ENCODE measurements at regions of chr1 and their contacts with region 1.

Region 1: DNA sequence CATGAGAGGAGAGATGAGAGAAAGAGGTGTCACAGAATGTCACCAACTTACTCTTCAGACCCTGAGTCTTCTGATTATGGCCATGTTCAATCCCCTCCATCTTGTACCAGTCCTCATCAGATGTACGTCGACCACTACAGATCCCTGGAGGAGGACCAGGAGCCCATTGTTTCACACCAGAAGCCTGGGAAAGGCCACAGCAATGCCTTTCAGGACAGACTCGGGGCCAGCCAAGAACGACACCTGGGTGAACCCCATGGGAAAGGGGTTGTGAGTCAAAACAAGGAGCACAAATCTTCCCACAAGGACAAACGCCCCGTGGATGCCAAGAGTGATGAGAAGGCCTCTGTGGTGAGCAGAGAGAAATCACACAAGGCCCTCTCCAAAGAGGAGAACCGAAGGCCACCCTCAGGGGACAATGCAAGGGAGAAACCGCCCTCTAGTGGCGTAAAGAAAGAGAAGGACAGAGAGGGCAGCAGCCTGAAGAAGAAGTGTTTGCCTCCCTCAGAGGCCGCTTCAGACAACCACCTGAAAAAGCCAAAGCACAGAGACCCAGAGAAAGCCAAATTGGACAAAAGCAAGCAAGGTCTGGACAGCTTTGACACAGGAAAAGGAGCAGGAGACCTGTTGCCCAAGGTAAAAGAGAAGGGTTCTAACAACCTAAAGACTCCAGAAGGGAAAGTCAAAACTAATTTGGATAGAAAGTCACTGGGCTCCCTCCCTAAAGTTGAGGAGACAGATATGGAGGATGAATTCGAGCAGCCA is 8.0 kb downstream of the ELOA start:
- DNase-seq: peak; percentile 38
- H3K4me3 ChIP-seq: no peak overlapping the region
- H3K27ac ChIP-seq: no peak overlapping the region
- H3K4me1 ChIP-seq: no peaks in the 10 kb centered on the region
- H3K27me3 ChIP-seq: no peaks in the 10 kb centered on the region
- CTCF ChIP-seq: peak; percentile 49

Region 2: GRCh38 chr1:23634842-23635651 is 116.2 kb before region 1 on chr1:
- intact Hi-C with region 1: loop called (anchors 5 kb)
- DNase-seq: peak; percentile 77
- H3K4me3 ChIP-seq: no peak overlapping the region
- H3K27ac ChIP-seq: peak overlapping the region; percentile 13
- H3K4me1 ChIP-seq: no peaks in the 10 kb centered on the region
- H3K27me3 ChIP-seq: no peaks in the 10 kb centered on the region
- CTCF ChIP-seq: peak; percentile 92

Region 3: DNA sequence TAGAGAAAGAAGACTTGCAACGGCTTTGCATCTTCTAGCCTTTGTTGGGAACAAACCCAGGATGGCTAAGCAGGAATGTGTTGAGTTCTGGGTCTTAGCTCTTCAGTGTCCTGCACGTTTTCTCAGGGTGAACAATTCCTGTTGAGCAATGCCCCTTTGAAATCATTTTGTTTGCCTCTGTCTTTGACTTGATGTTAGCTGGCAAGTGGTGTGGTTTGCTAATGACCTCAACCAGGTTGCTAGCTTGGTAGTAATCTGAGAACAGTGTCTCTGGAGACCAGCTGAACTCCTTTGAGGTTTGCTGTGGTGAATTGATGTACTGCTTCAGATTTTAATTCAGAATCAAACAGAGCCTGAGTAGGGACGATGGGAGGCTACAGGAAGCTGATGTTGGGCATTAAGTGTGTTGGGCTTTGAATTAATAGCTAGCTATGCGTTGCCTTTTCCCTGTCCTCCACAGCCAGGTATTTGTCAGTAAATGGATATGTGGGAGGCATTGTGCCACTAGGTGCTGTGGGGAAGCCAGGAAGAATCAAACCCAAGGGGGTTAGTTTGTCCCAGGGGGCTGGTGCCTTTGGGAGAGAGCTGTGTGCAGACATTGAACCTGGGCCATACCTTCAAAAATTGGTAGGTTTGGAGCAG is 252.2 kb after region 1 on chr1:
- intact Hi-C with region 1: no loop called
- DNase-seq: no peak
- H3K4me3 ChIP-seq: no peak overlapping the region
- H3K27ac ChIP-seq: no peak overlapping the region
- H3K4me1 ChIP-seq: no peaks in the 10 kb centered on the region
- H3K27me3 ChIP-seq: no peaks in the 10 kb centered on the region
- CTCF ChIP-seq: no peak

Region 4: DNA sequence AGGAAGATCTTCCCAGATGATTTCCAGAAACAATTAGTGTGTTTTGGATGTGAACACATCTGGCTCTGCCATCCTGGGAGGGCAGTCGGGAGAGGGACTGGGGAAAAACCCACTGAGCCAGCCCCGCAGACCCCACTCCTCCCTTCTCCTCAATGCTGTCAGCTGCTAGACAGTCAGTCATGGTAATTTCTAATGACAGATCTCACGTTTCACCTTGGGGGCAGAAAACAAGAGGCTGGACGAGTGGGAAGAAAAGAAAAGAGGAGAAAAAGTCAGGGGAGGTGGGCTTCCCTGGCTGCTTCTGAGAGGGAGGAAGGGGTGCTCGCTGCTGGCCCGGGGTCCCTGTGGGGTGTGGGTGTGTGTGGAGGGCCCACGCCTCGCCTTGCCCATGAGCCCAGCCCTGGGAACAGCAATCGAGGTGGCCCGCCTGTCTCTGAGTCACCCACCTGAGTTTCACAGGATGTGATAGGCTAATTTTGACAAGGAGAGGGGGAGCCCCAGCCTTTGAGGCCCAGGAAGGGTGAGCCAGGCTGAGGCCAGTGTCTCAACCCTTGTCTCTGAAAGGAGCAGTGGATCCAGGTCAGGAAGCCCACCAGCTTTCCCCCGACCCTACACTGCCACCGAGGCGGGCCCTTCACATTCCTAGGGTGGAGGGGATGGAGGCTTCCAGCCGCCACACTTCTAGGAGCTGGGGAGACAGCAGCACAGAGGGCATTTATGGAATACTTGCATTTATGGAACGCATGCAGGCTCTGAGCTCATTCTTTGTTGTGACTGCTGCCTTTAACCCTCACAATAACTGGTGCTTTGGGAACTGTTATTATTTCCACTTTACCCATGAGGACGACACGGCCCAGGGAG is 484.9 kb after region 1 on chr1:
- intact Hi-C with region 1: no loop called
- DNase-seq: no peak
- H3K4me3 ChIP-seq: no peak overlapping the region
- H3K27ac ChIP-seq: no peak overlapping the region
- H3K4me1 ChIP-seq: no peaks in the 10 kb centered on the region
- H3K27me3 ChIP-seq: no peaks in the 10 kb centered on the region
- CTCF ChIP-seq: no peak

Measured in colonic mucosa (tissue), 4 donors.